ENCODE measurements at regions of chr9 and their contacts with region 1.

Region 1: DNA sequence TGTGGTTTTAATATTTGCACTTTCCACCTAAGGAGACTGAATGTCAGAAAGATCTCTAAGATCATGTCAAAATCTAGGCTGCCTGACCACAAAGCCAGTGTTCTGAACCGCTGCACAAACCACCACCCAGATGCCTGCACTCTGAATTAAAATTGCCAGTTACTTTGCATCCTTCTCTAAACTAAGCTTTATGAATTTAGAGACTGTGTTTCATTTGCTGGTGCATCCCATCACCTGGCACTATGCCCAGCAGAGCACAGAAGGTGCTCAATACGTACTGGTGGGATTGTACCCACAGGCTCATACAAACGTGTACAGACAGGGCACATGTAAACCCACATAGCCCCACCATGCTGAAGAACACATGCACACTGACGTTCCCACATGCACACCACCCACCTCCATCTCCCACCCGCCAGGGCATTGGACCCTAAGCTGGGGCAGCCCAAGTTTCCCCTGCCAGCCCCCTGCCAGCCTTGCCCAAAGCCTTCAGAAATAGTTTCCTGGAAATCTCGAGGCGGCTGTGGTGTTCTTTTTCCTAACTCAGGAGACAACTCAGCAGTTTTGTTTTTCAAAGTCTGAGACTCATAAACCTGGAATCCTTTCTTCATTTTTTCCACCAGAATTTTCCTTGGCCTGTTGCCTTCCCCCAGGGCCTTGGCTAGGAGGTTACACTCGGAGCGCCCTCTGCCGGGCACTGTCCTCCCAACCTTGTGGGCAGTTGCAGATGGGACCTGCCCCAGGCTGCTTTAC is 9.6 kb upstream of the TRAF1 start:
- DNase-seq: peak; percentile 96
- H3K4me3 Mint-ChIP-seq: peak overlapping the region; percentile 68
- H3K27ac Mint-ChIP-seq: peak overlapping the region; percentile 89
- H3K4me1 Mint-ChIP-seq: peaks cover 55% of the 10 kb centered on the region
- H3K27me3 Mint-ChIP-seq: peaks cover 5% of the 10 kb centered on the region

Region 2: GRCh38 chr9:120755827-120756434 is 180.3 kb before region 1 on chr9:
- intact Hi-C with region 1: loop called (anchors 1 kb)
- DNase-seq: peak; percentile 93
- H3K4me3 Mint-ChIP-seq: no peak overlapping the region
- H3K27ac Mint-ChIP-seq: peak overlapping the region; percentile 48
- H3K4me1 Mint-ChIP-seq: peaks cover 15% of the 10 kb centered on the region
- H3K27me3 Mint-ChIP-seq: no peaks in the 10 kb centered on the region

Region 3: GRCh38 chr9:120820095-120820494 is 116.1 kb before region 1 on chr9:
- intact Hi-C with region 1: no loop called
- DNase-seq: no peak
- H3K4me3 Mint-ChIP-seq: no peak overlapping the region
- H3K27ac Mint-ChIP-seq: no peak overlapping the region
- H3K4me1 Mint-ChIP-seq: peaks cover 6% of the 10 kb centered on the region
- H3K27me3 Mint-ChIP-seq: no peaks in the 10 kb centered on the region

Region 4: DNA sequence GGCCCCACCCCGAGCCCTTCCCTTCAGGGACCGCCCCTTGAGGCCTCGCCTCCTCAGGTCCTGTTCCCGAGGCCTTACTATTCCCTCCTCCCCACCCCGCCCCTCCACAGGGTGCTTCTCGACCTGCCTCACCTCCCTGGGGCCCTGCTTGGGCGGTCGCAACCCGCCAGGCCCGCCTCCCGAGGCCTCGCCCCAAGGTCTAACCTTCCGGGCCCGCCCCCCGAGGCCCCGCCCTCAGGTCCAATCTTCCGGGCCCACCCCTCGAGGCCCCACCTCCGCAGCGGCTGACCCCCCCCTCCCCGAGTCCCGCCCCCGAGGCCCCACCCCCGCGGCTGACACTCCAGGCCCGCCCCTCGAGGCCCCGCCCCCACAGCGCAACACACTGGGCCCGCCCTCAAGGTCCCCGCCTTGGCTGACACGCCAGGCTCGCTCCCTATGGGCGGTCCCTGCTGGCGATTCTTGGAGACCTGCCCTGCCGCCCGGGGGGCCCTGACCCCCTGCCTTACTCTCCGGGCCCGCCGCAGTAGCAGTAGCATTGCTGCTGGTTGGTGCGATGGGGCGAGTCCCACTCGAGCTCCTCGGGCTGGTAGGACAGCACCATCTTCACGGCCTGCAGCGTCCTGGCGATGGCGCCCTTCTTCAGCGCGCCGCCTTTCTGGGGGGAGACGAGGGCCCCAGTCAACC is 67.4 kb before region 1 on chr9:
- intact Hi-C with region 1: loop called (anchors 1 kb)
- DNase-seq: peak; percentile 98
- H3K4me3 Mint-ChIP-seq: peak overlapping the region; percentile 90
- H3K27ac Mint-ChIP-seq: peak overlapping the region; percentile 95
- H3K4me1 Mint-ChIP-seq: peaks cover 40% of the 10 kb centered on the region
- H3K27me3 Mint-ChIP-seq: no peaks in the 10 kb centered on the region

Region 5: DNA sequence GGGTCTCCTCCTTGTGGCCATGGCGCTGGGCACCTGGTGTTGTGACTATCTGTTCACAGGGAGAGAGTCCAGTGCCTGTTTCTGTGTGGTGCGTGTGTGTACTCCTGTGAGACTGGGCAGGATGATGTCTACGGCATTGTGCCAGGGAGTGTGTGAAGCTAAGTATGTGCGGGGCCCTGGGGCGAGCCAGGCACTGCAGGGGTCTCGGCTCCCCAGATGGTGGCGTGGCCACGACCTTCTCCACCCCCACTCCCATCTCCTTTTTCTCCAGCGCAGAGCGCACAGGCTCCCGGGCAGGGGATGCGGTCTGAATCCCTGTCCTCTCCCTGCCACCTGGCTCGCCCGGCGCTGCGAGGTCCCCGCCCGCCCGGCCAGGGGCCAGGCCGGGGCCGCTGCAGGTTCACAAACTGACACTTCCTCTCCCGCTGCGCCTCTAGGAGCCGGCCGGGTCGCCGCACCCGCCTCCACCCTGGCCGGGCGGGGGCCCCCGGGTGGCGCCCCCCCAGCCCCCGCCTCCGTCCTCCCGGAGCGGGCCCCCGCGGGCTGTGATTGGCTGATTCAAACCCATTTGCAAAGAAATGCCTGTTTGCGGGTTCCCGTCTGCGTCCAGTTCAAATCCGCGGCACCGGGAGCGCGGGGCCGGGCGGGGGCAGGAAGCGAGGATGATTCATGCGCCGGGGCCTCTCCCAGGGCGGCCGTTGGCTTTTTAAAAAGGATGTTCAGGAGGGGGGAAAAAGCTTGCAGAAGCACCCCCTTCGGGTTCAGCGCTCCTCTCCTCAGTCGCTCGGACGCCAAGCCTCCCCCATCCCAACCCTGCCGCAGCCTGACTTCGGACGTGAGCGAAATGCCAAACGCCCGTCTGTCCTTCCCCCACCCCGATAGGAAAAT is 60.0 kb before region 1 on chr9:
- intact Hi-C with region 1: loop called (anchors 1 kb)
- DNase-seq: peak; percentile 96
- H3K4me3 Mint-ChIP-seq: peak overlapping the region; percentile 97
- H3K27ac Mint-ChIP-seq: peak overlapping the region; percentile 97
- H3K4me1 Mint-ChIP-seq: peaks cover 73% of the 10 kb centered on the region
- H3K27me3 Mint-ChIP-seq: no peaks in the 10 kb centered on the region

Region 6: GRCh38 chr9:120892748-120893610 is 43.2 kb before region 1 on chr9:
- intact Hi-C with region 1: loop called (anchors 1 kb)
- DNase-seq: peak; percentile 90
- H3K4me3 Mint-ChIP-seq: peak overlapping the region; percentile 85
- H3K27ac Mint-ChIP-seq: peak overlapping the region; percentile 99
- H3K4me1 Mint-ChIP-seq: peaks cover 79% of the 10 kb centered on the region
- H3K27me3 Mint-ChIP-seq: no peaks in the 10 kb centered on the region

Region 7: GRCh38 chr9:120916588-120916987 is 19.6 kb before region 1 on chr9:
- intact Hi-C with region 1: loop called (anchors 2 kb)
- DNase-seq: no peak
- H3K4me3 Mint-ChIP-seq: peak overlapping the region; percentile 72
- H3K27ac Mint-ChIP-seq: peak overlapping the region; percentile 74
- H3K4me1 Mint-ChIP-seq: peaks cover 74% of the 10 kb centered on the region
- H3K27me3 Mint-ChIP-seq: no peaks in the 10 kb centered on the region

Region 8: GRCh38 chr9:120974921-120975320 is 38.7 kb after region 1 on chr9:
- intact Hi-C with region 1: no loop called
- DNase-seq: peak; percentile 62
- H3K4me3 Mint-ChIP-seq: no peak overlapping the region
- H3K27ac Mint-ChIP-seq: no peak overlapping the region
- H3K4me1 Mint-ChIP-seq: peaks cover 16% of the 10 kb centered on the region
- H3K27me3 Mint-ChIP-seq: no peaks in the 10 kb centered on the region

Measured in activated CD4-positive, alpha-beta T cell treated with anti-CD3 and anti-CD28 coated beads, Interleukin-2, amount 10 ng/mL, durations not matched to agents 24 days and 14 days (primary cell).